GM12878 (cell line): ENCODE measurements at regions of chr1 and their contacts with region 1.

Region 1: GRCh38 chr1:68120136-68120791 is 69.8 kb upstream of the DIRAS3 start:
- DNase-seq: peak; percentile 24
- ATAC-seq: peak; percentile 81
- H3K4me3 ChIP-seq: no peak overlapping the region
- H3K27ac ChIP-seq: no peak overlapping the region
- H3K4me1 ChIP-seq: no peaks in the 10 kb centered on the region
- H3K27me3 ChIP-seq: no peaks in the 10 kb centered on the region
- CTCF ChIP-seq: peak; percentile 69 to 82 (median 75)
- EP300 ChIP-seq: no peak
- POLR2A ChIP-seq: no peak
- RAD21 ChIP-seq: peak; percentile 91

Region 2: GRCh38 chr1:68132426-68133130 is 12.3 kb after region 1 on chr1:
- CTCF ChIA-PET with region 1: interaction called, 18 read pairs
- POLR2A ChIA-PET with region 1: no interaction called
- RAD21 ChIA-PET with region 1: interaction called, 9 read pairs
- SMC1A ChIA-PET with region 1: interaction called, 10 read pairs
- in situ Hi-C with region 1: no loop called
- intact Hi-C with region 1: no loop called
- DNase-seq: no peak
- ATAC-seq: no peak
- H3K4me3 ChIP-seq: no peak overlapping the region
- H3K27ac ChIP-seq: no peak overlapping the region
- H3K4me1 ChIP-seq: no peaks in the 10 kb centered on the region; the same call in 1 of the 2 replicates
- H3K27me3 ChIP-seq: no peaks in the 10 kb centered on the region; a peak in 1 of 4 replicates
- CTCF ChIP-seq: no peak
- EP300 ChIP-seq: no peak
- POLR2A ChIP-seq: no peak
- RAD21 ChIP-seq: no peak

Region 3: DNA sequence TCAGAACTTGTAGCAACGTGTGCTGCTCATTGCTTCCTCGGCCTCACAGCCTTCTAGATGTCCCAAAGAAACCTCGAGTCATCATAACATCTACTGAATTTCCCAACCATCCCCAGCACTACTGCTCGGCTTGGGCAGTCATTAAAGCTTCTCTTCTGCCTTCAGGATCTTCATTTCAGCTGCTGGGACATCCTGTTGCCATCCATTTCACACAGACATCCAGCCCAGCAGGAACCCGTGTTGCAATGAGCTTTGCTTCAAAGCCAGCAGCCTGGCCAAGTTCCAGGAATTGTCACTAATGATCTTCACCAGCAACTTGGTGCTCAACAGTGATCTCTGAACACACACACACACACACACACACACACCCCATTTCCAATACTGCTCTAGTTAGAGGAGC is 93.6 kb after region 1 on chr1:
- CTCF ChIA-PET with region 1: interaction called, 4 read pairs
- POLR2A ChIA-PET with region 1: no interaction called
- RAD21 ChIA-PET with region 1: no interaction called
- SMC1A ChIA-PET with region 1: interaction called, 3 read pairs
- in situ Hi-C with region 1: no loop called
- intact Hi-C with region 1: loop called (anchors 5 kb)
- DNase-seq: no peak
- ATAC-seq: no peak
- H3K4me3 ChIP-seq: no peak overlapping the region
- H3K27ac ChIP-seq: no peak overlapping the region
- H3K4me1 ChIP-seq: no peaks in the 10 kb centered on the region
- H3K27me3 ChIP-seq: no peaks in the 10 kb centered on the region; a peak in 2 of 4 replicates
- CTCF ChIP-seq: no peak
- EP300 ChIP-seq: no peak
- POLR2A ChIP-seq: no peak
- RAD21 ChIP-seq: no peak

Region 4: GRCh38 chr1:68346188-68346808 is 226.0 kb after region 1 on chr1:
- CTCF ChIA-PET with region 1: interaction called, 178 read pairs
- POLR2A ChIA-PET with region 1: no interaction called
- RAD21 ChIA-PET with region 1: interaction called, 125 read pairs
- SMC1A ChIA-PET with region 1: interaction called, 83 read pairs
- in situ Hi-C with region 1: loop called (anchors 5 kb)
- intact Hi-C with region 1: loop called (anchors 1 kb)
- DNase-seq: no peak
- ATAC-seq: peak; percentile 56
- H3K4me3 ChIP-seq: no peak overlapping the region
- H3K27ac ChIP-seq: no peak overlapping the region
- H3K4me1 ChIP-seq: no peaks in the 10 kb centered on the region
- H3K27me3 ChIP-seq: no peaks in the 10 kb centered on the region
- CTCF ChIP-seq: peak; percentile 1 to 33 (median 24); a peak in 3 of 6 replicates
- EP300 ChIP-seq: no peak
- POLR2A ChIP-seq: no peak
- RAD21 ChIP-seq: peak; percentile 28; the same call in 1 of the 2 replicates

Region 5: GRCh38 chr1:68954841-68955240 is 834.6 kb after region 1 on chr1:
- CTCF ChIA-PET with region 1: no interaction called
- POLR2A ChIA-PET with region 1: no interaction called
- RAD21 ChIA-PET with region 1: no interaction called
- SMC1A ChIA-PET with region 1: no interaction called
- in situ Hi-C with region 1: no loop called
- intact Hi-C with region 1: loop called (anchors 10 kb)
- DNase-seq: no peak
- ATAC-seq: no peak
- H3K4me3 ChIP-seq: no peak overlapping the region
- H3K27ac ChIP-seq: no peak overlapping the region
- H3K4me1 ChIP-seq: no peaks in the 10 kb centered on the region
- H3K27me3 ChIP-seq: no peaks in the 10 kb centered on the region
- CTCF ChIP-seq: no peak
- EP300 ChIP-seq: no peak
- POLR2A ChIP-seq: no peak
- RAD21 ChIP-seq: no peak